WTC11 (cell line): ENCODE measurements at regions of chr2 and their contacts with region 1.

Region 1: DNA sequence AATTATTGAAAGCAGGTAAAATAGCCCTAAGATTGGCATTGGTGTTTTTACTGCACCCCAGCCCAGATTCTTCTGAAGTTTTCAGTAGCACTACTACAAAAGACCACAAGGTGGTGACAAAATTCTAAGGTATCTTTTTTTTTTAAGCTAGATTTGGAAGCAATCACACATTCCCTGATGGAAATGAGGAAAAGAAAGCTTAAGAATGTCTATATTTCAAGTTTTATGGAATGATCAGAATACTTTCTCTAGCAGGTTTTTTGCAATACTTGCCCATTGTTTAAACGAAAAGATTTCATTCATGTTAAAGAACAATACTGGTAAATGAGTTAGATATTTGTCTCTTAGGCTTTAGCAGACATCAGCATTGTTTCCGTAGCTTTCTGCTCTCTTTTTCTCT is 32.1 kb upstream of the ZNF638 start:
- DNase-seq: no peak
- ATAC-seq: no peak; the same call in 1 of the 2 replicates
- H3K4me3 Mint-ChIP-seq: no peak overlapping the region
- H3K27ac Mint-ChIP-seq: no peak overlapping the region
- H3K4me1 Mint-ChIP-seq: no peaks in the 10 kb centered on the region
- H3K27me3 Mint-ChIP-seq: no peaks in the 10 kb centered on the region
- CTCF ChIP-seq: peak; percentile 60

Region 2: DNA sequence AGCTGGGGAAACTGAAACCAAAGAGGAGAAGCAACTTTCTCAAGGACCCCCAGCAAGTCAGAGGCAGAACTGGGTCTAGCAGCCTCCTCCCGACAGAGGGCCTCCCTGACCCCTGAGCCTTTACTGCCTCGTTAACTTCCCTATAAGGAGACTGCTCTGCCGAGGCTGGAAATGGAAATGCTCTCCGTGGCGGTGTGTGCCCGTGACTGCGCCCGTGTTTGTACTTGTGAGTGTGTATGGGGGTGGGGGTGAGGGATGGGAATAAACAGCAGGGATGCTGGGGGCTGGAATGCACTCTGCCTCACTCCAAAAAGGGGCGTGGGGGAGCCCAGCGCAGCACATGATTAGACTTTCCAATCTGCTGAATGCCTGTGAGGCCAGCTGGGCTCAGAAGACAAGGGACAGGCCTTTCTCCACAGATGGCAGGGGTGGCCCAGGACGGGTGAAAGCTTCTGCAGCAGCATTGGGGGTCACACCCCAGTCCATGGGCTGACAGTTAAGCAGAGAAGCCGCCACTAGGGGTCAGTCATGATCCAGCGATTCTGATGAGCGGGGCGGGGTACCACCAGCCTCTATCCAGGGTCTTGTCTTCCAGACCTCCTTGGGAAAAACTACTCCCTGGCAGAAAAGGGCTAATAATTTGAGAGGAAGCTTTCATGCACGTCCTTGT is 142.2 kb before region 1 on chr2:
- CTCF ChIA-PET with region 1: interaction called, 10 read pairs
- POLR2A ChIA-PET with region 1: no interaction called
- DNase-seq: peak; percentile 91
- ATAC-seq: peak; percentile 89
- H3K4me3 Mint-ChIP-seq: peak overlapping the region; percentile 13; the same call in 1 of the 2 replicates
- H3K27ac Mint-ChIP-seq: no peak overlapping the region
- H3K4me1 Mint-ChIP-seq: peaks cover 14% of the 10 kb centered on the region
- H3K27me3 Mint-ChIP-seq: no peaks in the 10 kb centered on the region; the same call in 1 of the 2 replicates
- CTCF ChIP-seq: peak; percentile 90

Region 3: DNA sequence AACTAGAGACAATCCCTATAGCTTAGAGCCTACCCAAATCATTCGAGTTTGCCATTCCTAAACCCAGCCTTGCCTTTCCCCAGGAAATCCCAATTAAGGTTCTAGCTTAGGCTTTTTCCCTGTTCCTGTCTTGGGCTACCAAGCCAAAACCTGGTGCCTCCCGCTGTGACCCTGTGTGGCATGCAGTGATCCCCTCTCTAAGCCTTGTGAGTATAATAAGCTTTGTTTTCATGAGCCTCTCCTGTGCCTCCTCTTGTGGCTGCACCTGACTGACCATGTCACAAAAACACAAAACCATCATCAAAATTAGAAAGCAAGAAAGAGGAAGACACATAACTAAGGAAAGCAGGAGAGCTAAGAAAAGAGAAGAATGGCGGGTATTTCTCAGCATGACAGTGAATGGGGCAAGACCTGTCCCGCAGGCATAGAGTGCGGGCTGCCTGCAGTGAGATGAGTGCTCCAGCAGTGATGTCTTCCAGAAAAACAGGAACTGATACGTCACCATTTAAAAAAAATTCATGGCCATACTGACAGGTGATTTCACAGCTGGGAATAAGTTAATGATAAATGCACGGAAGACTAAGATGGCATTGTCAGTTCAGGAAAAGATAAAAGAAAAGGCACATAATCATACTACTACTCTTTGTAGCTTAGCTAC is 63.4 kb before region 1 on chr2:
- CTCF ChIA-PET with region 1: interaction called, 11 read pairs
- POLR2A ChIA-PET with region 1: no interaction called
- DNase-seq: peak; percentile 38
- ATAC-seq: peak; percentile 79
- H3K4me3 Mint-ChIP-seq: no peak overlapping the region
- H3K27ac Mint-ChIP-seq: no peak overlapping the region
- H3K4me1 Mint-ChIP-seq: peaks cover 6% of the 10 kb centered on the region
- H3K27me3 Mint-ChIP-seq: peaks cover 6% of the 10 kb centered on the region; the same call in 1 of the 2 replicates
- CTCF ChIP-seq: no peak

Region 4: GRCh38 chr2:71282495-71282894 is 17.0 kb before region 1 on chr2:
- CTCF ChIA-PET with region 1: interaction called, 23 read pairs
- POLR2A ChIA-PET with region 1: interaction called, 3 read pairs
- DNase-seq: no peak
- ATAC-seq: peak; percentile 75
- H3K4me3 Mint-ChIP-seq: no peak overlapping the region
- H3K27ac Mint-ChIP-seq: no peak overlapping the region
- H3K4me1 Mint-ChIP-seq: peaks cover 40% of the 10 kb centered on the region
- H3K27me3 Mint-ChIP-seq: peaks cover 4% of the 10 kb centered on the region
- CTCF ChIP-seq: no peak

Region 5: DNA sequence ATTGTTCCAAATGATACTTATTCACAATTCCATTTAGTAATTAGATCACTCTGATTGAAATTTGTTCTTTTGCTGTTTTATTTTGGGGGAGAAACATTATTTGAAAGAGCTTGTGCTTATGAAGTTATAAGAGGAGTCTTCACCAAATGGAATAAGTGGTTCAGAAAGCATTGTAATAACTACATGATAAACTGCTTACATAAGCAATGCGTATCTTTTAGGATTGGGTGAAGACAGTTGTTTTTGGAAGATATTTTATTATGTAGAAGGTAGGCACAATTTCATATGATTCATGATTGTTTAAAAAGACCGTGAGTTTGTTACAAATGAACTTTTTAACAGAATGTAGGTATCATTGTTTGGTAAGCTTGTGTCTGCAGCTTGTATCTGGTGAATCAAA is 46.6 kb after region 1 on chr2:
- CTCF ChIA-PET with region 1: interaction called, 28 read pairs
- POLR2A ChIA-PET with region 1: interaction called, 5 read pairs
- DNase-seq: no peak
- ATAC-seq: no peak
- H3K4me3 Mint-ChIP-seq: no peak overlapping the region
- H3K27ac Mint-ChIP-seq: no peak overlapping the region
- H3K4me1 Mint-ChIP-seq: no peaks in the 10 kb centered on the region
- H3K27me3 Mint-ChIP-seq: no peaks in the 10 kb centered on the region
- CTCF ChIP-seq: no peak

Region 6: GRCh38 chr2:71452565-71452964 is 153.1 kb after region 1 on chr2:
- CTCF ChIA-PET with region 1: interaction called, 20 read pairs
- POLR2A ChIA-PET with region 1: interaction called, 3 read pairs
- DNase-seq: peak; percentile 59
- ATAC-seq: no peak
- H3K4me3 Mint-ChIP-seq: peak overlapping the region; percentile 65
- H3K27ac Mint-ChIP-seq: no peak overlapping the region
- H3K4me1 Mint-ChIP-seq: peaks cover 62% of the 10 kb centered on the region
- H3K27me3 Mint-ChIP-seq: peaks cover 44% of the 10 kb centered on the region
- CTCF ChIP-seq: no peak

Region 7: DNA sequence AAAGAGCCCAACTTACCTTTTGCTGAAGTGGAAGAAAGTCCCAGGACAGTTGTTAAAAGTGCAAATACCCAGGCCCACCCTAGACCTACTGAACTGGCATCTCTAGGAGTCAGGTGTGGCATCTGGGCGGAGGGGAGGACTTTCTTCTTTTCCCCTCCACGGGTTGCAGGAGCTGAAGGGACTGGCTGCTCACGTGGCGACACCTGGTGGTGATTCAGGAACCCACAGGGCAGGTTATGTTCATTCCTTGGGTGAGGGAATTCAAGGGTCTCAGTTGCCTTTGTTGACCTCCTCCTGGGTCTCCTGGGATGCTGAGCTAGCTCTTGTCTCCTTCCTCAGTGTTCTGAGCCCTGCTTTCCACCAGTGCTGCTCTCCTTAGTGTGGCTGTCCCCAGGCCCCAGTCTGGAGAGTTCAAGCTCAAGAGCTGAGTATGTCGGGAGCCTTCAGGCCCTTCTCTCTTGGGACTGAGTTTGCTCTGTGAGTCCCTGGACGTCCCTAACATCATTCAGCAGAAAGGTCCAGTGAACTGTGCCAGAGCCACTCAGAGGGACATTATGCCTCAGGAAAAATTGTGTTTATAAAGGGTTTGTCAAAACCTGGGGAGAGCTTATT is 210.8 kb after region 1 on chr2:
- CTCF ChIA-PET with region 1: interaction called, 49 read pairs
- POLR2A ChIA-PET with region 1: no interaction called
- DNase-seq: peak; percentile 89
- ATAC-seq: peak; percentile 85
- H3K4me3 Mint-ChIP-seq: no peak overlapping the region
- H3K27ac Mint-ChIP-seq: no peak overlapping the region
- H3K4me1 Mint-ChIP-seq: no peaks in the 10 kb centered on the region
- H3K27me3 Mint-ChIP-seq: no peaks in the 10 kb centered on the region
- CTCF ChIP-seq: peak; percentile 79

Region 8: GRCh38 chr2:71578767-71579342 is 279.3 kb after region 1 on chr2:
- CTCF ChIA-PET with region 1: no interaction called
- POLR2A ChIA-PET with region 1: no interaction called
- DNase-seq: no peak
- ATAC-seq: no peak
- H3K4me3 Mint-ChIP-seq: no peak overlapping the region
- H3K27ac Mint-ChIP-seq: no peak overlapping the region
- H3K4me1 Mint-ChIP-seq: no peaks in the 10 kb centered on the region
- H3K27me3 Mint-ChIP-seq: no peaks in the 10 kb centered on the region
- CTCF ChIP-seq: no peak